ENCODE measurements at regions of chr12 and their contacts with region 1.

Region 1: GRCh38 chr12:51977320-51977753 is 25.8 kb downstream of the ACVR1B start:
- DNase-seq: no peak
- H3K27ac ChIP-seq: no peak overlapping the region
- CTCF ChIP-seq: no peak

Region 2: DNA sequence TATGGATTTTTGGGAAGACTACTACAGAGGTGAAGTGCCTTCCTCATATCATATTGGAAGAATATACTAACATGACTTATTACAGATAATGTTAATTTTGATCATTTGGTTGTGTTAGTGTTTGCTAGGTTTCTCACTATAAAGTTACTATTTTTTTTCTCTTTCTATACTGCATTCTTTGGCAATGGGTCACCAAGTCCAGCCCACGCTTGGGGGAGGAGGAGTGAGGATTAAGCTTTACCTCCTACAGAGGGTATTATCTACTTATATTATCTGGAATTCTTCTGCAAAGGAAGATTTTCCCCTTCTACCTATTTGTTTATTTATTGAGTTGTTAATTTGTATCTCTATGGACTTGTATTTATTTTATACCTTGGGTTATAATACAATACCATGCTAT is 354.8 kb before region 1 on chr12:
- CTCF ChIA-PET with region 1: no interaction called
- POLR2A ChIA-PET with region 1: no interaction called
- DNase-seq: no peak
- H3K27ac ChIP-seq: no peak overlapping the region
- CTCF ChIP-seq: no peak

Region 3: GRCh38 chr12:53287741-53288216 is 1310.4 kb after region 1 on chr12:
- CTCF ChIA-PET with region 1: no interaction called
- POLR2A ChIA-PET with region 1: interaction called, 13 read pairs
- DNase-seq: peak; percentile 48
- H3K27ac ChIP-seq: peak overlapping the region; percentile 44
- CTCF ChIP-seq: peak; percentile 72

Measured in RWPE1 (cell line).